HCT116 (cell line): ENCODE measurements at regions of chr22 and their contacts with region 1.

Region 1: GRCh38 chr22:31635638-31636306 is 26.2 kb downstream of the PISD start:
- DNase-seq: no peak
- ATAC-seq: no peak
- H3K4me3 ChIP-seq: no peak overlapping the region
- H3K27ac ChIP-seq: peak overlapping the region; percentile 54
- H3K4me1 ChIP-seq: peaks cover 27 to 64% of the 10 kb centered on the region in 2 experiments
- H3K27me3 ChIP-seq: no peaks in the 10 kb centered on the region
- CTCF ChIP-seq: no peak
- POLR2A ChIP-seq: no peak
- RAD21 ChIP-seq: no peak

Region 2: GRCh38 chr22:31218565-31219262 is 417.1 kb before region 1 on chr22:
- CTCF ChIA-PET with region 1: no interaction called
- POLR2A ChIA-PET with region 1: no interaction called
- RAD21 ChIA-PET with region 1: no interaction called
- intact Hi-C with region 1: no loop called
- DNase-seq: no peak
- ATAC-seq: no peak
- H3K4me3 ChIP-seq: no peak overlapping the region
- H3K27ac ChIP-seq: no peak overlapping the region
- H3K4me1 ChIP-seq: peaks cover 0 to 7% of the 10 kb centered on the region in 2 experiments; a peak in 1 of 4 replicates
- H3K27me3 ChIP-seq: no peaks in the 10 kb centered on the region
- CTCF ChIP-seq: no peak
- POLR2A ChIP-seq: no peak
- RAD21 ChIP-seq: no peak

Region 3: DNA sequence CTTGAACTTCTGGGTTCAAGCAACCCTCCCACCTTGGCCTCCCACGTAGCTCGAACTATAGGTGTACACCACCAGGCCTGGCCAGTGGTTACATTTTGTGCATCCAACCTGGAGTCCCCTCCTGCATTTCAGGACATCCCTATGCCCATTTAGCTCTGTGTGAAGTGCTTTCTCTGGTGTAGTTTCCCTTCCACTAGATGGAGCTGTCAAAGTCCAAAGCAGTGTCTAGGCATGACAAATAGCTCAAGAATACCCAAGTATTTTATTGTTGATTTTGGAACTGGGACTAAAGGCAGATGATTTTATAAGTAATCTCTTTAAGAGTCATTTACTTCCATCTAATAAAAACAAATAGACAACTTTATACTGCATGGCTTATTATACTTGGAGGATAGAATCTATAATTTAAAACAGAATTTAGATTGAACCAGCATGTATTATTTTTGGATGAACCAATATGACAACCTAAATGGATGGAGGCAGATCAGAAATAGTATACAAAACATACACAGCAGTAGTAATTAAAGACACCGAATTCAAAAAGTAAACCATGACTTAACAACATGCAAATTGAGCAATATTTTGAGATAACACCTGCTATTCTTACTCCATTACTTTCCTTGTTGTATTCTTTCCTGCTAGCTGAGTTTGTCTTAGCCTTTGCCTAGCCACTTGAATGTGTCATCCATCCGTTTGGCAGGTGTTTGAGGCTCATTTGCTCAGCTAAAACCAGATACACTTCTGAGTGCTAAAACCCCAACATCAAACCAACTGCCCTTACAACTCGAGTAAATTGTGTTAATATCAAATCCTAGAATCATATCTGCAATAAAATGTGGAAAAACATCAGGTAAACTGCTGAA is 183.8 kb before region 1 on chr22:
- CTCF ChIA-PET with region 1: interaction called, 11 read pairs
- POLR2A ChIA-PET with region 1: interaction called, 3 read pairs
- RAD21 ChIA-PET with region 1: no interaction called
- intact Hi-C with region 1: loop called (anchors 2 kb)
- DNase-seq: peak; percentile 21
- ATAC-seq: peak; percentile 95
- H3K4me3 ChIP-seq: no peak overlapping the region
- H3K27ac ChIP-seq: no peak overlapping the region
- H3K4me1 ChIP-seq: no peaks in the 10 kb centered on the region
- H3K27me3 ChIP-seq: no peaks in the 10 kb centered on the region
- CTCF ChIP-seq: peak; percentile 48 to 75 (median 72); a peak in 5 of 6 replicates
- POLR2A ChIP-seq: no peak
- RAD21 ChIP-seq: peak; percentile 43; the same call in 1 of the 2 replicates

Region 4: DNA sequence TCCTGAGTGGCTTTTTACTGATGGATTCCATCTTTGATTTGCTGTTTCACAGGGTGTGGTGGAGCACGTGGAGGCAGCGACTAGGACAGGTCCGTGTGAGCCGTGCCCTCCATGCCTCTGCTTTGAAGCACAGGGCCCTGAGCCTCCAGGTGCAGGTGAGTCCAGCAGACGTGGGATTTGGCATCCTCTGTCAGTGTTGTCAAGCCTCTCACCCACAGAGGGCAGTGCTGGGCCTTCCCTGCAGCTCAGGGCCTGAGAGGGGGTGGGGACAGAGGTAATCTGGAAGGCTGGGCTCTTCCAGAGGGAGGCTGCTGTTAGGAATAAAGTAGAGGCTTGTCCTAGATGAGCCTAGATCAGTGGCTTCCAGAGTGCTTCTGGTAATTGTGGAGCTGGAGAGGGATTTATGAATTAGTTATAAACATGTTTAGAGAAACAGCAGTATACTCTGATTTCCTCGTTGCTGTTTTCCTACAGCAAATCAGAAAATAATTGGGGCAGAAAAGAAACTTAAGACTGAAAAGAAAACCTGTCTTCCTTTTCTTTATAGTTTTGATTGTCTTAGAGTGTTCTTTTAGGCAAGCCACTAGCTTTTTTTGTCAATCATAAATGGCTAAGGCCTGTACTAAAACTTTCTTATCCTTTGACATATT is 74.4 kb before region 1 on chr22:
- CTCF ChIA-PET with region 1: interaction called, 11 read pairs
- POLR2A ChIA-PET with region 1: interaction called, 3 read pairs
- RAD21 ChIA-PET with region 1: no interaction called
- intact Hi-C with region 1: loop called (anchors 1 kb)
- DNase-seq: peak; percentile 68
- ATAC-seq: peak; percentile 100
- H3K4me3 ChIP-seq: no peak overlapping the region
- H3K27ac ChIP-seq: no peak overlapping the region
- H3K4me1 ChIP-seq: peaks cover 3 to 10% of the 10 kb centered on the region in 2 experiments; a peak in 3 of 4 replicates
- H3K27me3 ChIP-seq: no peaks in the 10 kb centered on the region
- CTCF ChIP-seq: peak; percentile 72 to 94 (median 79)
- POLR2A ChIP-seq: no peak
- RAD21 ChIP-seq: peak; percentile 78

Region 5: DNA sequence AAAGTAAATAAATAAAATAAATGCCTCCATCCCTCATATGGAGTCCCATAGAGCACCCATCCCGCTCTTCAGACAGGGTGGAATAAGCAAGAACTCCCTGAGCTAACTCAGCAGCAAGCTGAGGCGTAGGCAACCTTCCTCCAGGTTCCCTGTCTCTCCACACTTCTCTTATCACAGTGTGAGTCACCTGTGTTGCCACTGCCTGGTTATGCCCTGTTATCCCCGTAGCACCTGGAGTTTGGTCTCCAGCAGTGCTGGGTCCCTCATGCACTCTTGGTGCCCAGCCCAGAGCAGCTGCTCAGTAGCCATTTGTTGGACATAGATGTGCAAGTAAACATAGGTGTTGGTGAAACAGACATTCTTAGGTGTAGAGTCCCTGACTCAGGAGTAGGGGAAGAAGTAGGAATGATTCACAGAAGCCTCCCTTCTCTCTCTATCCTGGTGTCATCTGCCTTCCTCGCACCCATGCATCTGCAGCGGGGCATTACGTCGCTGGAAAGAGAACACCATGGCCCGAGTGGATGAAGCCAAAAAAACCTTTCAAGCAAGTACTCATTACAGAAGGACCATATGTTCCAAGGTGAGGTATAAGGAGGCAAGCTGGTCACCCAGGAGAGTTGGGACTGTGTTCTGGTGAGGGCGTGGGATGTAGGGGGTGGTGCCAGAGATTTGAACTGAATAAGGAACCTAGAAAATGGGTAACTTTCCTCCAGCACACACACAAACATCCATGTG is 29.8 kb before region 1 on chr22:
- CTCF ChIA-PET with region 1: no interaction called
- POLR2A ChIA-PET with region 1: no interaction called
- RAD21 ChIA-PET with region 1: no interaction called
- intact Hi-C with region 1: no loop called
- DNase-seq: no peak
- ATAC-seq: no peak
- H3K4me3 ChIP-seq: no peak overlapping the region
- H3K27ac ChIP-seq: no peak overlapping the region
- H3K4me1 ChIP-seq: no peaks in the 10 kb centered on the region
- H3K27me3 ChIP-seq: no peaks in the 10 kb centered on the region
- CTCF ChIP-seq: no peak
- POLR2A ChIP-seq: no peak
- RAD21 ChIP-seq: no peak